Upper lobe of right lung (tissue), 1 donor: ENCODE measurements at regions of chr6 and their contacts with region 1.

Region 1: DNA sequence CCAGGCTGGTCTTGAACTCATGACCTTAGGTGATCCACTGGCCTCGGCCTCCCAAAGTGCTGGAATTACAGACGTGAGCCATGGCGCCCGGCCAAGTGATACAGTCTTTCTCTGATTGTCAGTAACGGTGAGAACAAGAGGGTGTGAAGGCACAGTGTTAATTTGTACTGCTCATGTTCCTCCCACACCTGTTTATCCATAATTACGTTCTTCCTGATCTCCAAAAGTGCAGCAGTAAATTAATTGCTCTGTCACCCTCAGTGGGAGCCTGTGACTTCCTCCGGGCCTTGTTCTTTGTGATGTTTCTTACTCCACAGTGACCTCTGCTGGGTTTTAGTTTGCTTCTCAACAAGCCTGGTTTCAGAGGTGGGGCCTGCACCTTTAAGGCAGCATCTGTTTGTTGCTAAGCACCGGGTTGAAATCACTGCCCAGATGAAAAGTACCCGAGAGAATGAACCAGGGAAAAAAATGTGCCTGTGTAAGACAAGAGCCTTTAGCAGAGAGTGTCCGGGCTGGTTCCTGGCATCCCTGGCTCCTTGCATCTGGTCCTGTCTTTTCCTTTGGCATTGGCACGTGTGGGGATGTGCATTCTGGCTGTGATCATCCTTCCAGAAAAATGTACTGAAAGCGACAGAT is 89.1 kb upstream of the CLDN20 start:
- DNase-seq: no peak
- ATAC-seq: peak; percentile 91
- H3K4me3 ChIP-seq: no peak overlapping the region
- H3K27ac ChIP-seq: no peak overlapping the region
- H3K4me1 ChIP-seq: peaks cover 15% of the 10 kb centered on the region
- H3K27me3 ChIP-seq: no peaks in the 10 kb centered on the region
- CTCF ChIP-seq: peak; percentile 59

Region 2: GRCh38 chr6:154852687-154853086 is 322.0 kb before region 1 on chr6:
- intact Hi-C with region 1: no loop called
- DNase-seq: no peak
- ATAC-seq: no peak
- H3K4me3 ChIP-seq: no peak overlapping the region
- H3K27ac ChIP-seq: no peak overlapping the region
- H3K4me1 ChIP-seq: no peaks in the 10 kb centered on the region
- H3K27me3 ChIP-seq: no peaks in the 10 kb centered on the region
- CTCF ChIP-seq: no peak

Region 3: DNA sequence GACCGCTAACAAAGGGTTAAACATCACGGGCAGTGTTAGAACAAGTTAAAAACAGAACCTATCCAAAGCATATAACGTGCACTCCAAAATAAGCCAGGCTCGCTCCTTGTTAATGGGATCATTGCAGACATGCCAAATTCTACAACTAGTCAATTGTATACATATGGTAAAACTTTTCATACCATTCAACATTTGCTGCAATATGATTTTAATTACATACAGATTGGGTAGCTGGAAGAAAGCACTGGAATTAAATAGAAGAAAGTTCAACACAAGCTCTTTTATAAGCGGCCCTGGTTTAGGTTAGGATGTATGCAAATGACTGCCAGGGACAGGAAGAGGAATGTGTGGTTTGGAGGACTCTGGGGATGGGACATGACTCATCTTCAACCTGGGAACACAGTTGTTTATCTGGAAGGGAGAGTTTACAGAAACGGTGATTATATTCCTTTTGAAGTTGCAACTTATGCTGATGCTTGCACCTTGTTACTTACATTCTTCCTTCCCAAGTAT is 242.1 kb before region 1 on chr6:
- intact Hi-C with region 1: loop called (anchors 10 kb)
- DNase-seq: no peak
- ATAC-seq: no peak
- H3K4me3 ChIP-seq: no peak overlapping the region
- H3K27ac ChIP-seq: no peak overlapping the region
- H3K4me1 ChIP-seq: no peaks in the 10 kb centered on the region
- H3K27me3 ChIP-seq: no peaks in the 10 kb centered on the region
- CTCF ChIP-seq: no peak

Region 4: GRCh38 chr6:155126727-155127439 is 47.8 kb before region 1 on chr6:
- intact Hi-C with region 1: no loop called
- DNase-seq: no peak
- ATAC-seq: no peak
- H3K4me3 ChIP-seq: no peak overlapping the region
- H3K27ac ChIP-seq: no peak overlapping the region
- H3K4me1 ChIP-seq: no peaks in the 10 kb centered on the region
- H3K27me3 ChIP-seq: no peaks in the 10 kb centered on the region
- CTCF ChIP-seq: no peak